BJ (cell line): ENCODE measurements at regions of chr2 and their contacts with region 1.

Region 1: GRCh38 chr2:210086292-210086691 is 83.9 kb downstream of the RPE start:
- DNase-seq: no peak
- H3K4me3 ChIP-seq: no peak overlapping the region
- H3K27me3 ChIP-seq: no peaks in the 10 kb centered on the region
- CTCF ChIP-seq: no peak

Region 2: DNA sequence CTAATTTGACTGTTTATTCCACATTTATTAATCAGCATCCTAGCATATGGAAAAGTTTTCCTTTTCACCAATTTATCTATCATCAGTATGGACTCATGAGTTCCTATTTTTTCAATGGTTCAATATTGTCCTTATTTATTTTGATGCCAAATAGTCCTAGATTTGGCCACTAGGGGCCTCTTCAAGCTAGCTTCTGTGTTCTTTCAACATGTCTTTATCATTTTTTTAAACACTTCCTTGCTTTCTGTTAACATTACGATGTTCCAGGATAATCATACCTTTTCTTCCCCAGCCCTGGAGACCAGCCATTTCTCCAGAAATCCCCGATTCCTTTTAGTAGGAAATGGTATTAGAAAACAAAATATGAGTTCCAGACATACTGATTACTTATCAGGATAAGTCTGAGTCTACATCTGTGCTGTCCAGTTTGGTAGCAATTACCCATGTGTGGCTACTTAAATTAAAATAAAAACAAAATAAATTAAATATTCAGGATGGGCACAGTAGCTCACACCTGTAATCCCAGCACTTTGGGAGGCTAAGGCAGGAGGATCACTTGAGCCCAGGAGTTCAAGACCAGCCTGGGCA is 13.3 kb before region 1 on chr2:
- CTCF ChIA-PET with region 1: interaction called, 10 read pairs
- POLR2A ChIA-PET with region 1: no interaction called
- DNase-seq: peak; percentile 5
- H3K4me3 ChIP-seq: no peak overlapping the region
- H3K27me3 ChIP-seq: no peaks in the 10 kb centered on the region
- CTCF ChIP-seq: peak; percentile 74

Region 3: GRCh38 chr2:210998334-210998733 is 912.0 kb after region 1 on chr2:
- CTCF ChIA-PET with region 1: no interaction called
- POLR2A ChIA-PET with region 1: no interaction called
- DNase-seq: no peak
- H3K4me3 ChIP-seq: no peak overlapping the region
- H3K27me3 ChIP-seq: no peaks in the 10 kb centered on the region
- CTCF ChIP-seq: no peak